K562 (cell line): ENCODE measurements at regions of chr13 and their contacts with region 1.

Region 1: GRCh38 chr13:27171827-27172494 is 350 bp upstream of the USP12 start:
- DNase-seq: peak; percentile 77 to 82 (median 80)
- ATAC-seq: peak; percentile 87
- H3K4me3 ChIP-seq: peak overlapping the region; percentile 69
- H3K27ac ChIP-seq: peak overlapping the region; percentile 83
- H3K4me1 ChIP-seq: peaks cover under 1 to 34% of the 10 kb centered on the region in 2 experiments; a peak in 4 of 5 replicates
- H3K27me3 ChIP-seq: no peaks in the 10 kb centered on the region
- CTCF ChIP-seq: no peak
- EP300 ChIP-seq: peak; percentile 64; the same call in 1 of the 2 replicates
- POLR2A ChIP-seq: peak; percentile 53
- RAD21 ChIP-seq: 0 out of 4 replicates have a peak, but pooled peaks of 1 of the 2 experiments have one; percentile 6

Region 2: DNA sequence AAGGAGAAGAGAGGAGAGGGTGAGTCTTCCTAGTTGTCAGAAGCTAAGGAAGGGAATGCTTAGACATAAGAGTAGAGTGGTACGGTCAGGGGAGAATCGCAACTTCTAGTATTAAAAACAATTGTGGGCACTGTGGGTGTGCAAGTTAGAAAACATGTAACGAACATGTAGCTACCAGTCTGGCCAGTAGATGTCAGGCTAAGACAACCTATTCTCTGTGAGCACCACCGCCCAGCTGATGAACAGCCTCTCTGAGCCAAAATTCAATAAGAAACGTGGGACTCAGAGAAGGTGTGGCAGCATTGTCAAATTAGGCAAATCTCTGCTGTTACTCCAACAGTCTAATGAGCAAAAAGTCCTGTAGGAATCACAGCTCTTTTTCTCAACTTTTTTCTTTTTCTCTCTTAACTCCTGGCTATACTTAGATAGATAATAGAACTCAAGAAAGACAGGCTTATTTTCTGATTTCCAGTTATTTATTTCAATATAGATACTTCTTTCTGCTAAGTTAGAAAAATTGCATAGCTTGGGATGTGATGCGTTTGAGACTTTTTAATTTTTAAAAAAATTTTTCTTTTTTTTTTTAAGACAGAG is 186.6 kb before region 1 on chr13:
- CTCF ChIA-PET with region 1: no interaction called
- POLR2A ChIA-PET with region 1: no interaction called
- in situ Hi-C with region 1: no loop called
- intact Hi-C with region 1: loop called (anchors 5 kb)
- DNase-seq: peak; percentile 53 to 81 (median 63)
- ATAC-seq: peak; percentile 68
- H3K4me3 ChIP-seq: no peak overlapping the region
- H3K27ac ChIP-seq: no peak overlapping the region
- H3K4me1 ChIP-seq: peaks cover 28 to 29% of the 10 kb centered on the region in 2 experiments
- H3K27me3 ChIP-seq: no peaks in the 10 kb centered on the region; a peak in 1 of 5 replicates
- CTCF ChIP-seq: peak; percentile 68 to 83 (median 76)
- EP300 ChIP-seq: no peak
- POLR2A ChIP-seq: no peak
- RAD21 ChIP-seq: peak; percentile 84 to 91

Region 3: DNA sequence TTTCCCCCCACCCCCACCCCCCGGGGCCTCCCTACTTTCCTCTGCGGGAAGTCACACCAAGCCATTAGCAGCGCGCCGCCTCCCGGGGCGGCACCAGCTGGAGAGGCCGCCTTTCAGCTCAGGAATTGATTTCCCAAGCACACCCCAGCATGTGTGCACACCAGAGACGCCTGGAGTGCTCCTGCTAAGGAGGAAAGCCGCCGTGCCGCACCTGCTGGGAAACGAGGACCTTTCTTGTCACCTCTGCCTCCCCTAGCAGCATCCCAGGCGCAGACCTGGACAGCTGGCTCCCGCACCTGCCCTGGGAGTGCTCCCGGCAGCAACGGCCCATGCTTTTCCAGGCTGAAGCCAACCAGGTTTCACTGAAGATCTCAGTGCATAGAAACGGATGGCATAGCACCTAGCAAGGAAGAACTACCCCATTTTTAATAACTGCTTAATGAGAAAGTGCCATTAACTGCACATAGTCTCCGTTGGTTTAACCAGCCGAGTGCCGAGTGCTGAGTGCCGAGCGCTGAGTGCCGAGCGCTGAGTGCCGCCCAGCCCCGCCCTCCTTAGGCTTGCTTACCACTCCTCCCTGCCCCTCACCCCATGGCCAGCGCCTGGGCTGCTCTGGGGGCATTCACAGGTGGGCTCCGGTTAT is 165.3 kb before region 1 on chr13:
- CTCF ChIA-PET with region 1: no interaction called
- POLR2A ChIA-PET with region 1: no interaction called
- in situ Hi-C with region 1: no loop called
- intact Hi-C with region 1: no loop called
- DNase-seq: no peak
- ATAC-seq: peak; percentile 72
- H3K4me3 ChIP-seq: no peak overlapping the region
- H3K27ac ChIP-seq: no peak overlapping the region
- H3K4me1 ChIP-seq: peaks cover 3 to 7% of the 10 kb centered on the region in 2 experiments; a peak in 4 of 5 replicates
- H3K27me3 ChIP-seq: peaks cover 22 to 47% of the 10 kb centered on the region in 2 experiments; a peak in 4 of 5 replicates
- CTCF ChIP-seq: no peak
- EP300 ChIP-seq: no peak
- POLR2A ChIP-seq: no peak
- RAD21 ChIP-seq: no peak

Region 4: GRCh38 chr13:27251166-27252091 is 79.5 kb after region 1 on chr13 and contains the start of gene RPL21:
- CTCF ChIA-PET with region 1: no interaction called
- POLR2A ChIA-PET with region 1: interaction called, 3 read pairs
- in situ Hi-C with region 1: no loop called
- intact Hi-C with region 1: loop called (anchors 2 kb)
- DNase-seq: peak; percentile 77 to 95 (median 80)
- ATAC-seq: peak; percentile 93
- H3K4me3 ChIP-seq: peak within 1 kb of the TSS; percentile 98
- H3K27ac ChIP-seq: peak within 1 kb of the TSS; percentile 99
- H3K4me1 ChIP-seq: no peaks in the 10 kb centered on the region; a peak in 3 of 5 replicates
- H3K27me3 ChIP-seq: no peaks in the 10 kb centered on the region
- CTCF ChIP-seq: no peak
- EP300 ChIP-seq: no peak
- POLR2A ChIP-seq: peak; percentile 93
- RAD21 ChIP-seq: no peak
- polyA plus RNA-seq, gene RPL21: 3,327 to 4,203 TPM

Region 5: DNA sequence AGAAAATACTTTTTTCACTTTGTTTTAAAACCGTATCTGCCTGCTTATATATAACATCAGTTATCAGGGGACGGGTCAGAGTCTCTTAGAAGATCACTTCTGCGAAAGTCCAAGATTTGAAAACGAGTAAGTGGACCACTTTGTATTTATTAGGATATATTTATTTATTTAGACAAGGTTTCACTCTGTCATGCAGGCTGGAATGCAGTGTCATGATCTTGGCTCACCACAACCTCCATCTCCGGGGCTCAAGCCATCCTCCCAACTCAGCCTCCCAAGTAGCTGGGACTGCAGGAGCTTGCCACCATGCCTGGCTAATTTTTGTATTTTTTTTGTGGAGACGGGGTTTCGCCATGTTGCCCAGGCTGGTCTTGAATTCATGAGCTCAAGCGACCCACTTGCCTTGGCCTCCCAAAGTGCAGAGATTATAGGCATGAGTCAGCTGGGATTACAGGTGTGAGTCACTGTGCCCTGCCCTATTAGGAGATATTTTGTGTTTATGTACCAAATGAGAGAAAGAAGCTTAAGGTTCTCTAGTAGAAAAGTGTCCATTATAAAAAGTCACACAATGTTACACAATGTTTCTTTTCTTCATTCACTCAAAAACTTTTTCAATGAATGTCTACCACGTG is 138.1 kb after region 1 on chr13:
- CTCF ChIA-PET with region 1: no interaction called
- POLR2A ChIA-PET with region 1: no interaction called
- in situ Hi-C with region 1: no loop called
- intact Hi-C with region 1: no loop called
- DNase-seq: no peak
- ATAC-seq: no peak
- H3K4me3 ChIP-seq: no peak overlapping the region
- H3K27ac ChIP-seq: no peak overlapping the region
- H3K4me1 ChIP-seq: no peaks in the 10 kb centered on the region
- H3K27me3 ChIP-seq: peaks cover 18 to 30% of the 10 kb centered on the region in 2 experiments; a peak in 4 of 5 replicates
- CTCF ChIP-seq: no peak
- EP300 ChIP-seq: no peak
- POLR2A ChIP-seq: no peak
- RAD21 ChIP-seq: no peak